ENCODE measurements at regions of chr17 and their contacts with region 1.

Region 1: DNA sequence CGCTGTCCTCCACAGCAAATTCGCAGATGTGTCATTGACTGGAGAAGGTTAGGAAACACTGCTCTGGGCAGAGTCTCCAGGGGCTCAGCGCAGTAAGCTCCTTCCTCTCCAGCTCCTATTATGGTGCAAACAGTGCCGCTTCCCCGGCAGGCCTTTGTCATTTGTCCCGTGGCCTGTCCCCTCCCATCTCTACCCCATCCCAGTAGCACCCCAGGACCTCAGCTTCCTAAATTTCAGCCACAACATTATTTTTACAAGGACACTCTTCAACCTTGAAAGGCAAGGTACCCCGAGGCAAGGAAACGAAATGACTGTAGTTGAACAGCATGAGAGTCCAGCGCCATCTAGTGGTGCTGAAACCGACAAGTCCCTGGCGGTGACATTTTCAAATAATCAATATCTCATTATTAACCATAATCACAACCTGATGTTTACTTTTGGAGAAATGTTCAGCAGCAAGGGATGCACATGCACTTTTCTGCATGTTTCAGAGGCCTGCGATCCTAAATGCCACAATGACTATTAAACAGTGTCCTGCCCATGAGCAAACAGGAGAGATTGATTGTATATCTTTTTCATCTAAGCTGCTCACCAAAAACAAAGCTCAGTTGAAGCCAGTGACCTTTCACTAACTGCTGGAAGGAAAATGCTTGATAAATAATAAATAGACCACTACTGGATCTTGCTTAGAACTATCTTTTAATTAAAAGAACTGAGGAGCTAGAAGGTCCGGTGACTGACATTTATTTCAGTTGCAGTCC is 16.5 kb downstream of the MRPS23 start:
- DNase-seq: peak; percentile 68 to 79
- H3K4me3 ChIP-seq: no peak overlapping the region
- H3K27ac ChIP-seq: peak overlapping the region in 2 of 3 donors; percentile 79 to 92
- H3K4me1 ChIP-seq: peaks cover 8 to 23% of the 10 kb centered on the region in 2 donors
- H3K27me3 ChIP-seq: no peaks in the 10 kb centered on the region
- CTCF ChIP-seq: peak; percentile 80 to 97 (median 90)
- POLR2A ChIP-seq: no peak

Region 2: DNA sequence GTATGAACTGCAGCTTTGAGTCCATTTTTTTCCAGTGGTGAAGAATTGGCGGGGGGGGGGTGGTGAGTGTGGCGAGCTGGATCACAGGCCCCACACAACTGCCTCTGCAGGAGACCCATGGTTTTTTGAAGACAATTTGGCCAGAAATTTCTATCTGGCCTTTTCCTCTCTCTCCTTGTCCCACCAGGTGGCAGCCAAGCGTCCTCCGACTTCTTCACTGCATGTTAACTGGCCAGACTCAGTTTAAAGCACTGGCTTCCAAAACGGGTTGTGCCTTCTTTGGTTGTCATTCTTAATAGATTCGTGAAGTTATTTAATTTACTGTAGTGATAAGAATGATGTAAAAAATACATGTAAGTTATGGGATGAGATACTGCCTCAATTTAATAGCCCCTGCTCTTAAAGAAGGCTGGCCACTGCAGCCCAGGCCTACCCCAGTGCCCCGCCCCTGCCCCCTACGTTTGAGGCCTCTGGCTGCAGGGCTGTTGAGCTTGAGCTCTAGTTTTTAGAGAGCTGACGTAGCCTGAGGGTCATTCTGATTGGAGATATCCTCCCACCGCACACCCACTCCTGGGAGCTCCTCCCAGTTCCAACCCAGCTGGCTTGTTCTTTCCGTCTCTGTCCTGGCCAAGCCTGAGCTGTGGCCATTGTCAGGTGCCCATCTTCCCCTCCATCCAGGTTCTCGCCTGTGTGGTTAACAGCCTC is 711.9 kb before region 1 on chr17:
- intact Hi-C with region 1: loop called (anchors 10 kb)
- DNase-seq: peak; percentile 34 to 39
- H3K4me3 ChIP-seq: no peak overlapping the region
- H3K27ac ChIP-seq: no peak overlapping the region
- H3K4me1 ChIP-seq: no peaks in the 10 kb centered on the region
- H3K27me3 ChIP-seq: no peaks in the 10 kb centered on the region
- CTCF ChIP-seq: peak in 1 of 6 experiments; percentile 23
- POLR2A ChIP-seq: no peak

Region 3: DNA sequence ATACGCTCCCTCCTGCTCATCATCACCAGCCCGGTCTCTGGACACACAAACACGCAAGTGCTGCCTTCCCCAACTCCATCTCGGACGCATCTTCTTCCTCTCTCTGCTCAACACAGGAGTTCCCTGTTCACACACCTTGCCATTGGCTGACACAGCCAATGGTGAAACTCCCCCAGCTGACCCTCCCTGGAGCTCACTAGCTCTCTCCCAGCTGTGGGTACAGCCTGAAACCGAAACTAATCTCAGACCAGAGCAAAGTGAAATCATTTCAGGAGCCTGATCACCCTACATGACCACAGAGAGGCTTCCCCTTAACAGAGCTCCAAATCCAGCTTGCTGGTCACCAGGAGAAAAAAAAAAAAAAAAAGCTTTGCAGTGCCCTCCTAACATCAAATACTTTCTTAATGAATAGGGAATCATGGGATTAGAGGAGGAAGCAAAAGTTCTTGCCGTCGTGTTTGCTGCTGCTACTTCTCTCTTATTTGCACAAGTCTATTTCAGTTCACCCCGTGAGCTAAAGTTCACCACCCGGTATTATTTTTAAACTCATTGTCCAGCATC is 113.5 kb after region 1 on chr17:
- intact Hi-C with region 1: no loop called
- DNase-seq: peak; percentile 56 to 60
- H3K4me3 ChIP-seq: peak overlapping the region in 1 of 3 donors; percentile 15
- H3K27ac ChIP-seq: peak overlapping the region; percentile 63 to 80 (median 75)
- H3K4me1 ChIP-seq: peaks cover 57 to 64% of the 10 kb centered on the region in 2 donors
- H3K27me3 ChIP-seq: no peaks in the 10 kb centered on the region
- CTCF ChIP-seq: no peak
- POLR2A ChIP-seq: peak in 1 of 2 donors; percentile 8

Measured in thyroid gland (tissue), 4 donors.